AG04449 (cell line): ENCODE measurements at regions of chr4 and their contacts with region 1.

Region 1: DNA sequence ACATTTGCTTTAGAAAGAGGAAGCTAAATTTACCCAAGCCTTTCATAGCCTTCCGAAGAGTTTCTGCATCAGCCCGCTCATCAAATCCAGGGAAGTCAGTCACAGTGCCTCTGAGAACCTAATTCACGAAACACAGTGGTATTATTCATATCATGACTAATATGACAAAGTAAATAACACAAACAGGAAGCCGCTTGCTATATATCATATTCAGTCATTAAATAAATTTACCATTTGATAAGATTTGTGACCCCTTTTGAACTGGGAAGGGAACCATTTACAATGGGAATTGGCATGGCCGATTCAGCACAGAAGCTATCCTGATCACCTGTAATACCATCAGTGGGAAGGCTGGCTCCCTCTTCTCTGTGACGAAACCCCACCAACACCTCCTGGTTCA is 10.5 kb downstream of the ANXA5 start:
- DNase-seq: no peak
- H3K4me3 ChIP-seq: no peak overlapping the region
- CTCF ChIP-seq: no peak

Region 2: DNA sequence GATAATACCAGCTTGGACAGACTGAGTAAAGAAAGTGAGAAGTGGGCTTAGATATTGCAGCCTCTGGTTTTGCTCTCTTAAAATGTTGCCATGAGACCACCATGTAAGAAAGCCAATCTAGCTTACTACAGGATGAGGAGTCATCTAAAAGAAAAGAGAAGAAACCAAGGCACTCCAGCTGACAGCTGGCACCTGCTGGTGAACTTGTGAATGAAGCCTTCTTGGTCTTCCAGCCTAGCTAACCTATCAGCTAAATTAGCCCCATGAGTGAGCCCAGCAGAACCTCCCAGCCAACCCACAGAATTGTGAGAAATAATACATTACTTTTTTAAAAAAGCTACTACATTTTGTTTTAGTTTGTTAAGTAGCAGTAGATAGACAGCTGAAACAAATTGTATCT is 150.9 kb before region 1 on chr4:
- CTCF ChIA-PET with region 1: no interaction called
- POLR2A ChIA-PET with region 1: no interaction called
- DNase-seq: no peak
- H3K4me3 ChIP-seq: no peak overlapping the region
- CTCF ChIP-seq: no peak

Region 3: DNA sequence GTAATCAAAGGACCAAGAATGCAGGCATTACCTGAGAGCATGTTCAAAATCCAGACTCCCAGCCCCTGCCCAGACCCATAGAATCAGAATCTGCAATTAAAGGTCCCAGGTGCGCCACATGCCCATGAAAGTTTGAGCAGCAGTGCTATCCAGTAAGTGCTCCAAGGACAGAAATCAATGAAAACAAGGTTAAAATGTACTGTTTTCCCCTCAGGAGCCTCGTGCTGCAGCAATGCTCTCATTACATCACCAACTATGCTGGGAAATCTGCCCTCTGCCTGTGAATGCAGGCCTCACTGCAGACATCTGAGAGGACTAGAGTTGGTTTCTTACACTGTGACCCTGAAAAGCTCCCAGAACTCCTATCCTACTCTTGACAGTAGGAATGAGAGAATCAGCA is 10.5 kb before region 1 on chr4:
- CTCF ChIA-PET with region 1: interaction called, 18 read pairs
- POLR2A ChIA-PET with region 1: interaction called, 3 read pairs
- DNase-seq: no peak
- H3K4me3 ChIP-seq: no peak overlapping the region
- CTCF ChIP-seq: peak; percentile 30